Spleen (tissue), 13 donors: ENCODE measurements at regions of chr9 and their contacts with region 1.

Region 1: DNA sequence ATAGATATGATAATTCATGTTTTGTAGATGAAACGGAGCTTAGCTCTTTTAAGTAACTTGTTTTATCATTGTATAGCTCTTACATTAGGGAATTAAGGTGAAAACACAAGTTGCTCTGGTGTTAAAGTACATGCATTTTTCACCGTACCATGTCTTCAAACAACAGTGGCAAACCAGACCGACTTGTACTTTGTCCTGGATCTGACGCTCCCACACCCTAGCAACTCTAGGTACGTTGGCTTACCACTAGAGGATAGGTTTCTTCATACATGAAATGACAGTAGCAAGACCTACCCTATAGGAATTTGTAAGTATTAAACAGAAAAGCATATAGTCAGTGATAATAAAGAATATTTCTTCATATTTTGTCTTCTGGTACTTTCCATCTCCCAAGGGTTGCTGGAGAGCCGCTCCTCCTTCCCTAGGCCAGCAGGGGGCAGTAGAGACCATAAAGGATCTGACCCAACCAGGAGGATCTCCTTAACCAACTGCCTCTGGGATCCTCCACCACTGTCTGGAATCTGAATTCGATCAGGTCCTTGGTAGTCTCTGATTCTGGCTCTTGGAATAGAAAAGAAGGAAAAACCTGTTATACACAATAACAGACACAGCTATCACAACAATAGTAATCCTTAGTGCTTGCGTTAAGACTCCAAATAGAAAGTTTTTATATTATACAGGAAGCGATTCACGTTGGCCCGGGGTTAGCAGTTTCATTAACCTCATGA is 136.7 kb downstream of the CAVIN4 start:
- DNase-seq: no peak
- H3K4me3 ChIP-seq: no peak overlapping the region
- H3K27ac ChIP-seq: no peak overlapping the region
- H3K4me1 ChIP-seq: no peaks in the 10 kb centered on the region
- H3K27me3 ChIP-seq: peaks cover 0 to 20% (median 0%) of the 10 kb centered on the region in 7 donors
- CTCF ChIP-seq: peak; percentile 8 to 79 (median 56)
- POLR2A ChIP-seq: no peak

Region 2: GRCh38 chr9:100486479-100487176 is 227.9 kb before region 1 on chr9:
- intact Hi-C with region 1: no loop called
- DNase-seq: no peak
- H3K4me3 ChIP-seq: no peak overlapping the region
- H3K27ac ChIP-seq: no peak overlapping the region
- H3K4me1 ChIP-seq: no peaks in the 10 kb centered on the region
- H3K27me3 ChIP-seq: peaks cover 0 to 3% (median 0%) of the 10 kb centered on the region in 7 donors
- CTCF ChIP-seq: no peak
- POLR2A ChIP-seq: no peak

Region 3: GRCh38 chr9:101311758-101312420 is 597.4 kb after region 1 on chr9:
- intact Hi-C with region 1: loop called (anchors 10 kb)
- DNase-seq: no peak
- H3K4me3 ChIP-seq: no peak overlapping the region
- H3K27ac ChIP-seq: no peak overlapping the region
- H3K4me1 ChIP-seq: no peaks in the 10 kb centered on the region
- H3K27me3 ChIP-seq: peaks cover 0 to 7% (median 0%) of the 10 kb centered on the region in 7 donors
- CTCF ChIP-seq: peak in 9 of 11 experiments; percentile 48 to 80 (median 65)
- POLR2A ChIP-seq: no peak